ENCODE measurements at regions of chr6 and their contacts with region 1.

Region 1: GRCh38 chr6:45156075-45156474 is 172.1 kb upstream of the RUNX2 start:
- DNase-seq: peak; percentile 47
- H3K4me3 Mint-ChIP-seq: no peak overlapping the region
- H3K27ac Mint-ChIP-seq: peak overlapping the region; percentile 53
- H3K4me1 Mint-ChIP-seq: peaks cover 56% of the 10 kb centered on the region
- H3K27me3 Mint-ChIP-seq: no peaks in the 10 kb centered on the region

Region 2: DNA sequence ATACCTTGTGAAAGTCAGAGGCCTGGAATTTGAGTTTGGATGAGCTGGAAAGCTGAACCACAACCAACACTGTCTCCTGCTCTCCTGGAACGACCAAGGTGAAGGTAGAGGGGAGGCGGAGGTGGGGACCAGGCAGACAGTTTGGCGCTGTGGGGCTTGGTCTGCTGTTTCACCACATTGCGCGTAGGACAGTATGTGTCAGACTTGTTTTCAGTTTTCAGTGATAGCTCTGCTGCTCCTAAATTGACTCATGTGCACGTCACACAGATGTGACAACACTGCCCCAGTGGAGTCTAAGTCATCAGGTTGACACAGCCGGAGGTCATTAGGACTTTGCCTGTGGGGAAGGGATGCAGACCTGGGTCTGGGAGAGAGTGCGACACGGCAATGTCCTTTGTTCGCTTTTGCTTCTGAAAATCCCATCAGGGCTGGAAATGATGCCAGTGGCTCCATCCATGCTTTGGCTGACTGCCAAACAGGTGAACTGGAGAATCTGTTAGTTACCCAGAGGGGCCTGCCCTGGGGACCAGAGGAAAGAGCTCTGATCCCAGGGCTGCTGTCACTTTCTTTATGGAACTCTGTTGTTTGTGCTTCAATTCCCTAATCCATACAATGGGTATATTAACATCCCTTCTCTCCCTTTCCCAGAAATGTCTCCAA is 513.1 kb before region 1 on chr6:
- intact Hi-C with region 1: loop called (anchors 1 kb)
- DNase-seq: no peak
- H3K4me3 Mint-ChIP-seq: no peak overlapping the region
- H3K27ac Mint-ChIP-seq: peak overlapping the region; percentile 84
- H3K4me1 Mint-ChIP-seq: peaks cover 21% of the 10 kb centered on the region
- H3K27me3 Mint-ChIP-seq: peaks cover 2% of the 10 kb centered on the region

Region 3: DNA sequence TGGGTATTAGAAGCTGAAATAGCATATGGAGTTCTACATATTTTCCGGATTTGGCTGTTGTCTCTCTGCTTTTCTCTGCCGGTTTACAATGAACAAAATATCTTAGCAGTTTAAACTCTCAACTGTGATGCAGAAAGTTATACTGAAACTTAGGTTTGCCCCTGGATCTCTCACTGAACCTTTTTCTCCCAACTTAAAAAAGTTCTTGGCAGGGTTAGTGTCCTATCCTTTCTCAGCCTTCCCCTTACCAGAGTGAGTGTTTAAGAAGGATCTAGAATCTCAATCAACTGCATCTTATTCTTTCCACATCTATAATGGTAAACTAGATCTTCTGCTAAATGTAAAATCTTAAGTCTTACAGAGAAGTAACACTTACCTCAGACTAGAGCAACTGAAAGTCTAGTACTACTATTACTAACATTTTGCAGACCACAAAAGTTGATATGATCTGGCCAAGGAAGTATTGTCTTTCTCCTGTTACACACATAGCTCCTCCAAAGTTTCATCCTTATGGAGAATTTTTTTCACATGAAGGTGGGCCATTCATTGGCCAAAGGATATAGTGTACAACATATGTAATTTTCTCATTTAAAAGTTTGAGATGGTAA is 220.3 kb before region 1 on chr6:
- intact Hi-C with region 1: no loop called
- DNase-seq: no peak
- H3K4me3 Mint-ChIP-seq: peak overlapping the region; percentile 59
- H3K27ac Mint-ChIP-seq: peak overlapping the region; percentile 86
- H3K4me1 Mint-ChIP-seq: peaks cover 68% of the 10 kb centered on the region
- H3K27me3 Mint-ChIP-seq: peaks cover 3% of the 10 kb centered on the region

Region 4: GRCh38 chr6:44976719-44977641 is 179.1 kb before region 1 on chr6:
- intact Hi-C with region 1: loop called (anchors 2 kb)
- DNase-seq: no peak
- H3K4me3 Mint-ChIP-seq: peak overlapping the region; percentile 4
- H3K27ac Mint-ChIP-seq: peak overlapping the region; percentile 84
- H3K4me1 Mint-ChIP-seq: peaks cover 43% of the 10 kb centered on the region
- H3K27me3 Mint-ChIP-seq: no peaks in the 10 kb centered on the region

Region 5: GRCh38 chr6:45001663-45002062 is 154.4 kb before region 1 on chr6:
- intact Hi-C with region 1: loop called (anchors 2 kb)
- DNase-seq: peak; percentile 8
- H3K4me3 Mint-ChIP-seq: peak overlapping the region; percentile 54
- H3K27ac Mint-ChIP-seq: peak overlapping the region; percentile 73
- H3K4me1 Mint-ChIP-seq: peaks cover 32% of the 10 kb centered on the region
- H3K27me3 Mint-ChIP-seq: no peaks in the 10 kb centered on the region

Region 6: GRCh38 chr6:45116714-45117410 is 39.2 kb before region 1 on chr6:
- intact Hi-C with region 1: loop called (anchors 2 kb)
- DNase-seq: no peak
- H3K4me3 Mint-ChIP-seq: no peak overlapping the region
- H3K27ac Mint-ChIP-seq: peak overlapping the region; percentile 47
- H3K4me1 Mint-ChIP-seq: peaks cover 24% of the 10 kb centered on the region
- H3K27me3 Mint-ChIP-seq: no peaks in the 10 kb centered on the region

Region 7: DNA sequence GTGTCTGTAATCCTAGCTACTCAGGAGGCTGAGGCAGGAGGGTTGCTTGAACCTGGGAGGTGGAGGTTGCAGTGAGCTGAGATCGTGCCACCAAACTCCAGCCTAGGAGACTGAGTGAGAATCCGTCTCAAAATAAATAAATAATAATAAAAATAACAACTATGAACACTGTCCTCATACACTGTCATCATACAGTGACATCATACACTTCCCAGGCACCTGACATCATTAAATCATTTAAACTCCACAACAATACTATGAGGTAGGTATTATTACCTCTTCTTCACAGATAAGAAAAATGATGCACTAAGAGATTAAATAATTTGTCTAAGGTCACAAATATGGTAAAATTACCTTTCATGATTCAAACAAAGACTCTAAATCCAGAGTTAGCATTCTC is 28.9 kb before region 1 on chr6:
- intact Hi-C with region 1: no loop called
- DNase-seq: no peak
- H3K4me3 Mint-ChIP-seq: no peak overlapping the region
- H3K27ac Mint-ChIP-seq: no peak overlapping the region
- H3K4me1 Mint-ChIP-seq: no peaks in the 10 kb centered on the region
- H3K27me3 Mint-ChIP-seq: no peaks in the 10 kb centered on the region

Region 8: DNA sequence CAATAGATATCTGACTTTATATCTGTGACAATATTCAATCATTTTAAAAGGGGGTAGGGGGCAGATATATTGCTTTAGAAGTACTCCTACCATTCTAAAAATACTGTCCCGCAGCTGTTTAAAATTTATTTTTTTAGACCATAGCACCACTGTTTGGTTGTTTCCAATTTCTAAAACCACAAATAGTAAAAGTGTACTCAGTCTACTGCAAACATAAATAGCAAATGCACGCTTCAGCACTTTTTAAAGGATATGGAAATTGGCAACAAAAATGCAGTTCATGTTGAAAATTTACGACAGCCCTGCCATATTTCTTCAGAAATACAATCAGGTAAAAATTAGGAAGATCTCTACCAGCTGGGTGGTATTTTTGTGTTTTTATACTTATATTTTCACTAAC is 40.0 kb after region 1 on chr6:
- intact Hi-C with region 1: loop called (anchors 5 kb)
- DNase-seq: no peak
- H3K4me3 Mint-ChIP-seq: no peak overlapping the region
- H3K27ac Mint-ChIP-seq: no peak overlapping the region
- H3K4me1 Mint-ChIP-seq: peaks cover 27% of the 10 kb centered on the region
- H3K27me3 Mint-ChIP-seq: no peaks in the 10 kb centered on the region

Region 9: DNA sequence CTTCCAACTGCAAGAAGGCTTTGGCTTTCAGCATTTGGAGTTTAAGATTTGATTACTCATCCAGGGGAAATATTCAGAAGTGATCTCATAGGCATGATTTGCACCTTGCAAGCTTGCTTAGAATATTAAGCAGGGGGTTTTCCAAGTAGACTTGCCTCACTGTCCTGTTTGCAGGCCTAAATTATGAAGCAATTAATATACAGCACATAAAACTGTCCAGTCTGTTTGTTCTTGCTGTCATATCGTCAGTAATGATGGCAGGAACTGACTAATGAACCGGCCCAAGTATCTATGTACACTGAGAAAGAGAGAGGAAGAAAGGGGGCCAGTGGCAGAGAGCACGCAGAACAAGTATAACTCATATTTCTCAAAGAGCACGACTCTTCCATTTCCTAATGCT is 434.1 kb after region 1 on chr6:
- intact Hi-C with region 1: loop called (anchors 2 kb)
- DNase-seq: no peak
- H3K4me3 Mint-ChIP-seq: no peak overlapping the region
- H3K27ac Mint-ChIP-seq: peak overlapping the region; percentile 74
- H3K4me1 Mint-ChIP-seq: peaks cover 87% of the 10 kb centered on the region
- H3K27me3 Mint-ChIP-seq: no peaks in the 10 kb centered on the region